MCF 10A (cell line): ENCODE measurements at regions of chr11 and their contacts with region 1.

Region 1: GRCh38 chr11:1694064-1694845 is 2.7 kb upstream of the KRTAP5-6 start:
- DNase-seq: peak; percentile 69
- H3K4me3 Mint-ChIP-seq: peak overlapping the region; percentile 11
- H3K27ac Mint-ChIP-seq: no peak overlapping the region
- H3K4me1 Mint-ChIP-seq: peaks cover 11% of the 10 kb centered on the region
- H3K27me3 Mint-ChIP-seq: no peaks in the 10 kb centered on the region
- CTCF ChIP-seq: peak; percentile 91

Region 2: GRCh38 chr11:1679881-1680280 is 14.4 kb before region 1 on chr11:
- CTCF ChIA-PET with region 1: interaction called, 31 read pairs
- POLR2A ChIA-PET with region 1: no interaction called
- intact Hi-C with region 1: no loop called
- DNase-seq: no peak
- H3K4me3 Mint-ChIP-seq: no peak overlapping the region
- H3K27ac Mint-ChIP-seq: no peak overlapping the region
- H3K4me1 Mint-ChIP-seq: no peaks in the 10 kb centered on the region
- H3K27me3 Mint-ChIP-seq: peaks cover 25% of the 10 kb centered on the region
- CTCF ChIP-seq: no peak

Region 3: GRCh38 chr11:1832211-1832919 is 138.1 kb after region 1 on chr11:
- CTCF ChIA-PET with region 1: interaction called, 171 read pairs
- POLR2A ChIA-PET with region 1: interaction called, 49 read pairs
- intact Hi-C with region 1: no loop called
- DNase-seq: no peak
- H3K4me3 Mint-ChIP-seq: no peak overlapping the region
- H3K27ac Mint-ChIP-seq: no peak overlapping the region
- H3K4me1 Mint-ChIP-seq: peaks cover 56% of the 10 kb centered on the region
- H3K27me3 Mint-ChIP-seq: no peaks in the 10 kb centered on the region
- CTCF ChIP-seq: peak; percentile 97

Region 4: DNA sequence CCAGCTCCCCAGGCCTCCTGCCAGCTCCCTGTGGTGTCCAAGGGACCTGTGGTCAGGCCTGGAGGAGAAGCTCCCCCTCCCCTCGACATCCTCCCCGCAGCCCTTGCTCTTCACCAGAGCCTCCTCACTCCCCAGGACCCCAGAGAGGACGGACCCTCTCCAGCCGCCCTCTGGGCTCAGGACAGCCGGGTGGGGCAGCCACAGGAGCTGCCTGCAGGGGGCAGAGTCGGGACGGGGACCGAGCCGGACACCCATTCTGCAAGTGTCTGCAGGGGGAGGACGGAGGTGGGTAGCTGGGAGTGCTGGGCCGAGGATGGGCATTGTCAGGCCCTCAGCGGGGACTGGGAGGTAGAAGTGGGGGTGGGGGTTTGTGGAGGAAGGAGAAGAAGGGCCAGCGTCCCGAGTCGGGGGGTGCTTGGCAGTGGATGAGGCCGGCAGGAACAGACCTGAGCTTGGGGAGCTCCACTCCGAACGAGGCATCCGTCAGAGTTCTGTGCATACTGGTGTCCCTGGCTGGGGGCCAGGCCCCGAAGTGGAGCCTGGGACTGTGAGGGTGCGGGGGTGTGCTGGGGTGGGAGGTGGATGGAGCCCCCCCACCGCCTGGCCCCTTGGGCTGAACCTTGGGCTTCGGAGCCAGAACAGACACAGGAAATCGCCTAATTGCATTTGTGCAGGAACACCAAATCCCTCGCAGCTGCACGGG is 182.3 kb after region 1 on chr11:
- CTCF ChIA-PET with region 1: interaction called, 18 read pairs
- POLR2A ChIA-PET with region 1: no interaction called
- intact Hi-C with region 1: no loop called
- DNase-seq: peak; percentile 80
- H3K4me3 Mint-ChIP-seq: peak overlapping the region; percentile 73
- H3K27ac Mint-ChIP-seq: peak overlapping the region; percentile 83
- H3K4me1 Mint-ChIP-seq: peaks cover 29% of the 10 kb centered on the region
- H3K27me3 Mint-ChIP-seq: no peaks in the 10 kb centered on the region
- CTCF ChIP-seq: peak; percentile 62

Region 5: GRCh38 chr11:1946812-1947484 is 252.7 kb after region 1 on chr11 and contains the start of gene MRPL23:
- CTCF ChIA-PET with region 1: interaction called, 12 read pairs
- POLR2A ChIA-PET with region 1: interaction called, 8 read pairs
- intact Hi-C with region 1: no loop called
- DNase-seq: no peak
- H3K4me3 Mint-ChIP-seq: no peak within 1 kb of the TSS
- H3K27ac Mint-ChIP-seq: no peak within 1 kb of the TSS
- H3K4me1 Mint-ChIP-seq: peaks cover 10% of the 10 kb centered on the region
- H3K27me3 Mint-ChIP-seq: no peaks in the 10 kb centered on the region
- CTCF ChIP-seq: no peak
- total RNA-seq, gene MRPL23: 89.2 and 98.0 TPM in 2 replicates

Region 6: DNA sequence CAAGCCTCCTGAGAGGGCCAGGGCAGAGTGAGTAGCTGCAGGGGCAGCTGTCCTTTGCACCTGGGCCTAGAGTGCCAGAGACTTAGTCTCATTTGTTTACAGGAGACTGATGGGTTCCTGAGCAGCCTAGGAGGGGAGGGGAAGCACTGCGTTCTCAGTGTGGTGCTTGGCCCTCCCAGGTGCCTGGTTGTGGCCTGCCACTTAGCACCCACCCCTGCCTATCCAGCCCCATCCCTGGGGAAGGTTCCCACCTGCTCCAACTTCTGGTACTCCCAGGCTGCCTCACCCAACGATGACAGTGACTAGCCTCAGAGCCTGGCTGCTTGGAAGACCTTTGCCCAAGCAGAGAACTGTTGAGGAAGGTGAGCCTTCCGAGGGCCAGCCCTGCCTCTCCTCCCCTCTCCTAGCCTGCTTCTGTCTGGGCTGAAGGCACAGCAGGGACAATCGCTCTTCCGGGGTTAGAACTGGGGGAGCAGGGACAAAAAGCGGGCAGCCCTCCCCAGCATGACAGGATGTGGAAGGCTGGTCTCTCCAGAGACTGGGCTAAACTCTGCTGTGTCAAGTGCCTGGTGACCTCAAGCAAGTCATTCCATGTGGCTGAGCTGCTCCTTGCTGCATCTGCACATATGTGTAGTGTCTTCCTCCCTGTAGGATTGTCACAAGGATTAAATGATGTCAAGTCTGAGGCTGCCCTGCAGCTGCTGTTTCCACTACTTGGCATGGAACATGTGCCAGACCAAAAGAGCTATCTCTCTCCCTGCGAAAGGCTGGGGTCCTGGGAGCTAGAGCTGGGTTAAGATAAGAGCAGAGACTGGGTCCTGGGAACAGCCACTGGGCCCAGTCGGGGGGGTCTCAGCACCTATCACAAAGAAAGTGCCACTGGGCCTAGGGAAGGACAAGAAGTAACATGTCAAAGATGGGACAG is 995.7 kb after region 1 on chr11:
- CTCF ChIA-PET with region 1: no interaction called
- POLR2A ChIA-PET with region 1: no interaction called
- intact Hi-C with region 1: no loop called
- DNase-seq: no peak
- H3K4me3 Mint-ChIP-seq: no peak overlapping the region
- H3K27ac Mint-ChIP-seq: peak overlapping the region; percentile 32
- H3K4me1 Mint-ChIP-seq: peaks cover 12% of the 10 kb centered on the region
- H3K27me3 Mint-ChIP-seq: no peaks in the 10 kb centered on the region
- CTCF ChIP-seq: no peak